PC-9 (cell line): ENCODE measurements at regions of chr5 and their contacts with region 1.

Region 1: DNA sequence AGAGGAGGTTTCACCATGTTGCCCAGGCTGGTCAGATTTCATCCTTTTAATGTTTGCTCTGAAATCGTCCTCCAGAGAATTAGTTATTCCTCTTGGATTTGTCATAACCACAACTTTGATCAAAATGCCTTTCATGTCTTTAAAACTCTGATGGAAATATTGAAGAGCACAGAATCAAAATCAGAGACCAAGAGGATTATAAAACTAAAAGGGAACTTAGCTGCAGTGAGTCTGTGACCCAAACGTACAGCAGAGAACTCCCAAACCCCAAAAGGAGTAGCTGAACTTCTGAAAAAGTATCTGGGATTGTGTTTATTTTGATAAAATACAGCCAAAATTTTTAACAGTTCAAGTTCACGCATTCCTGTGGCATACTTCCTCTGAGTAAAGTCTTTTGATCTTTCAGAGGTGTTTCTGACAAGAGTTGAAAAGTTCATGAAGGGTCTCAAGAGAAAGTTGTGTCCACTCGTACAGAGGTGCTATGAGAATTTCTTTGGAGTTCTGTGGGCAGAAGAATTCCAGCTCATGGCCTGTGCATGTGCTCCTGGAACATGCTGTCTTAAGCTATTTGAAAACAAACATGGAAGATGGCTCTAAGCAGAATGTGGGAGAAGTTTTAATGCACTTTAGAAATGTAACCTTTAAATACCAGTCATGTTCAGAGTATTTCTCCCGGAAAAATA is 124.0 kb downstream of the ESM1 start:
- DNase-seq: no peak
- H3K4me3 ChIP-seq: no peak overlapping the region
- H3K27ac ChIP-seq: no peak overlapping the region
- H3K4me1 ChIP-seq: peaks cover 13% of the 10 kb centered on the region
- H3K27me3 ChIP-seq: no peaks in the 10 kb centered on the region
- CTCF ChIP-seq: no peak

Region 2: GRCh38 chr5:55211157-55211839 is 349.9 kb after region 1 on chr5:
- CTCF ChIA-PET with region 1: no interaction called
- POLR2A ChIA-PET with region 1: interaction called, 22 read pairs
- intact Hi-C with region 1: no loop called
- DNase-seq: peak in 1 of 2 experiments; percentile 40
- H3K4me3 ChIP-seq: no peak overlapping the region
- H3K27ac ChIP-seq: no peak overlapping the region
- H3K4me1 ChIP-seq: 0 out of 2 replicates have a peak, but pooled peaks cover 6% of the 10 kb centered on the region
- H3K27me3 ChIP-seq: no peaks in the 10 kb centered on the region
- CTCF ChIP-seq: no peak